ENCODE measurements at regions of chr3 and their contacts with region 1.

Region 1: DNA sequence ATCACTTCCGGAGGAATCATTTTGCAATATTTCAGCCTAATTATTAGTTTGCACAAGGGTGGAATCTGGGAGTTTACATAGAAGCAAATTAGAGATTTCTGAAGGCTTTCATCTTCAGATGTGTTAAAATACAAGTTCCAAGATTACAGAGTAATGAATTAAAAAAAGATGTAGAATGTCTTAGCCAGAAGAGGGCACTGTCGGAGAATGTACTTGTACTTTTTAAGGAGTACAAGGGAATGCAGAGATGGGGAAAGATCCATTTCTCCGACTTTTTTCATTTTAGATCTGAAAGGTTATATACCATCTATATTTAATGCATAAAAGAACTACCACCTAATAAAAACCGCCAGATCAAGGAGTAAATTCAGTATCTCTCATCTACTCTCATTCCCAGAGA is 43.1 kb upstream of the WDR5B start:
- H3K4me3 Mint-ChIP-seq: no peak overlapping the region
- H3K27ac Mint-ChIP-seq: no peak overlapping the region
- H3K4me1 Mint-ChIP-seq: no peaks in the 10 kb centered on the region
- H3K27me3 Mint-ChIP-seq: no peaks in the 10 kb centered on the region

Region 2: GRCh38 chr3:122392868-122393844 is 65.8 kb before region 1 on chr3:
- intact Hi-C with region 1: loop called (anchors 5 kb)
- H3K4me3 Mint-ChIP-seq: no peak overlapping the region
- H3K27ac Mint-ChIP-seq: no peak overlapping the region
- H3K4me1 Mint-ChIP-seq: peaks cover 12% of the 10 kb centered on the region
- H3K27me3 Mint-ChIP-seq: no peaks in the 10 kb centered on the region

Region 3: GRCh38 chr3:122533931-122534334 is 74.9 kb after region 1 on chr3:
- intact Hi-C with region 1: loop called (anchors 10 kb)
- H3K4me3 Mint-ChIP-seq: no peak overlapping the region
- H3K27ac Mint-ChIP-seq: no peak overlapping the region
- H3K4me1 Mint-ChIP-seq: peaks cover 18% of the 10 kb centered on the region
- H3K27me3 Mint-ChIP-seq: no peaks in the 10 kb centered on the region

Region 4: DNA sequence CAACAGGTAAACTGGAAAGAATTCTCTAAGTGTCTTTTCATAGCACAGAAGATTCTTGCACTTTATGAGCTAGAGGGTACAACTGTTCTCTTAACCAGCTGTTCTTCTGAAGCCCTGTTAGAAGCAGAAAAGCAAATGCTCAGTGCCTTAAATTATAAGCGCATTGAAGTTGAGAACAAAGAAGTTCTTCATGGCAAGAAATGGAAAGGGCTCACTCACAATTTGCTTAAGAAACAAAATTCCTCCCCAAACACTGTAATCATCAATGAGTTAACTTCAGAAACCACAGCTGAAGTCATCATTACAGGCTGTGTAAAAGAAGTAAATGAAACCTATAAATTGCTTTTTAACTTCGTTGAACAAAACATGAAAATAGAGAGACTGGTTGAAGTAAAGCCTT is 241.2 kb after region 1 on chr3:
- intact Hi-C with region 1: loop called (anchors 5 kb)
- H3K4me3 Mint-ChIP-seq: no peak overlapping the region
- H3K27ac Mint-ChIP-seq: no peak overlapping the region
- H3K4me1 Mint-ChIP-seq: peaks cover 4% of the 10 kb centered on the region
- H3K27me3 Mint-ChIP-seq: no peaks in the 10 kb centered on the region

Region 5: DNA sequence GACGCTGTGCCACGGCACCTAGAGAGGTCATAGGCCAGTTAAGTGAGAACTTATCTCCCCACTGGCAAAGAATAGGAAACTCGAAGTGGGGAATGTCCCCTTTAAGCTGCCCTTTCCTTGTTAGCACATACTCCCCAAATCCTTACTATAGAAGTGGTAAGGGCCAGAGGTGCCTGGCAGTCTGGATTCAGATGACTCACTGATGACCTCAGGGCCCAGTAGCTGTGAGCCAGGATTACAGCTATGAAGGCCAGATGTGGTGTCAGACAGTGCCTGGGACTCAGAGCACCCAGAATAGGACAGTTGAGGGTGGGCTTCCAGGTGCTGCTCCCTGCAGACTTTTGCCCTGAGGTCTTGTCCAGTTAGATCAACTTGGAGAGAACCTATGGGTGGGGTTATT is 645.6 kb after region 1 on chr3:
- intact Hi-C with region 1: no loop called
- H3K4me3 Mint-ChIP-seq: no peak overlapping the region
- H3K27ac Mint-ChIP-seq: no peak overlapping the region
- H3K4me1 Mint-ChIP-seq: peaks cover 7% of the 10 kb centered on the region
- H3K27me3 Mint-ChIP-seq: no peaks in the 10 kb centered on the region